Activated T-helper 1 cell treated with anti-CD3 and anti-CD28 coated beads, Interleukin-12 subunit alpha, Interleukin-12 subunit beta, Interleukin-2, Interleukin-4 antibody, amounts not matched to agents 30 ng/mL and 10 ng/mL and 1 ng/mL, durations not matched to agents 14 hours and 24 hours and 36 hours (primary cell): ENCODE measurements at regions of chr11 and their contacts with region 1.

Region 1: GRCh38 chr11:10808553-10809372 is at the start of gene EIF4G2:
- DNase-seq: peak; percentile 98
- H3K4me3 Mint-ChIP-seq: peak within 1 kb of the TSS; percentile 95
- H3K27ac Mint-ChIP-seq: peak within 1 kb of the TSS; percentile 98
- H3K4me1 Mint-ChIP-seq: peaks cover 43% of the 10 kb centered on the region
- H3K27me3 Mint-ChIP-seq: no peaks in the 10 kb centered on the region
- total RNA-seq, gene EIF4G2: 1,084 and 1,108 TPM in 2 replicates

Region 2: GRCh38 chr11:10612216-10612862 is 196.4 kb before region 1 on chr11:
- intact Hi-C with region 1: no loop called
- DNase-seq: no peak
- H3K4me3 Mint-ChIP-seq: no peak overlapping the region
- H3K27ac Mint-ChIP-seq: no peak overlapping the region
- H3K4me1 Mint-ChIP-seq: no peaks in the 10 kb centered on the region
- H3K27me3 Mint-ChIP-seq: peaks cover 28% of the 10 kb centered on the region

Region 3: DNA sequence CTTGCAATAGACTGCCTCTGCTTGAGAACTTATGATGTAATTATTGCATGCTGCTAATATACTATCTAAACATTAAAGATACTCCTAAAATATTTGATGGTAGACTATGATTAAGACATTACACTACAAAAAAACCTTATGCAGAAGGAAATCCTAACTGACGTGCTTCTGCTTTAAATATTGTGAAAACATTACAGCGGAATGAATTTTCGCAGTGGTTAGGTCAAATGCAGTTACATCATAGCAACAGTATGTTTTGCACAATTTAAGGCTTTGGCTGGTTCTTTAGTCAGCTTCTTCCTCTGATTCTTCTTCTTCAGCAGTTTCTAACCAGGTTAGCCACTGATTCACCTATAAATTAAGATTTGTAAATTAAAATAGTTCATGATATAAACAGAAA is 11.2 kb before region 1 on chr11:
- intact Hi-C with region 1: loop called (anchors 1 kb)
- DNase-seq: no peak
- H3K4me3 Mint-ChIP-seq: no peak overlapping the region
- H3K27ac Mint-ChIP-seq: no peak overlapping the region
- H3K4me1 Mint-ChIP-seq: peaks cover 62% of the 10 kb centered on the region
- H3K27me3 Mint-ChIP-seq: peaks cover 3% of the 10 kb centered on the region

Region 4: GRCh38 chr11:10828402-10828801 is 19.6 kb after region 1 on chr11:
- intact Hi-C with region 1: no loop called
- DNase-seq: no peak
- H3K4me3 Mint-ChIP-seq: no peak overlapping the region
- H3K27ac Mint-ChIP-seq: no peak overlapping the region
- H3K4me1 Mint-ChIP-seq: peaks cover 8% of the 10 kb centered on the region
- H3K27me3 Mint-ChIP-seq: no peaks in the 10 kb centered on the region

Region 5: DNA sequence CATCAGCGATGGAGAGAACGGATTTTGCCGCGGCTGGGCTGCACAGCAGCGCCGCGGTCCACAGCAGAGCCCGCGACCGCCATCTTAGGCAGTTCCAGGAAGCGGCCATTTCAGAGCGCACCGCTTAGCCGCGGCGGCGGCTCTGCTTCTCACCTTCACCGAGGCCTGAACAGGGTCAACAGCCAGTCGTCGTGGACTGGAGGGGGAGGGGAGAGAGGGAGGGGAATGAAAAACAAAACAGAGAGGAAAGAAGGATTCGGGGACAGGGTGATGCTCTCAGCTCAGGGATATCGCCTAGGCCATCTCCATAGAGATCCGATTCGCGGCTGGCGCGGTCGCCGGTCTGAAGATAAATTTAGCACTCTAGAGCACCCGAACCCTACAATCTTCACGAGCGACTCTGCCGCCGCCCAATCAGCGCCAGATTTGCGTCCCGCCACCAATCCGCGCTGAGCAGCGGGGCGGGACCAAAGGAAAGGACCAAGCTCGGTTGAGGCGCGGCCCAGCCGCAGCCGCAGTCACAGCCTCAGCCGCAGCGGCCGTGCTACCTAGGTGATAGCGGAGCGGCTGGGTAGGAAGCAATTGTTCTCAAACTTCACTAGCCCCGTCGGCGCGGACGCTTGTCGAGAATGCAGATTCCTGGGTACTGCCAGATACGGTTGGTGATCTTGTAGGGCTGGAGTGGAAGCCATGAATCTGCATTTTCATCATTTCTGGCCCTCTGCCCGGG is 49.1 kb after region 1 on chr11 and contains the start of gene ZBED5:
- intact Hi-C with region 1: loop called (anchors 1 kb)
- DNase-seq: peak; percentile 94
- H3K4me3 Mint-ChIP-seq: peak within 1 kb of the TSS; percentile 100
- H3K27ac Mint-ChIP-seq: peak within 1 kb of the TSS; percentile 100
- H3K4me1 Mint-ChIP-seq: peaks cover 46% of the 10 kb centered on the region
- H3K27me3 Mint-ChIP-seq: no peaks in the 10 kb centered on the region
- total RNA-seq, gene ZBED5: 38.9 and 42.2 TPM in 2 replicates